Right cardiac atrium (tissue), 5 donors: ENCODE measurements at regions of chr16 and their contacts with region 1.

Region 1: DNA sequence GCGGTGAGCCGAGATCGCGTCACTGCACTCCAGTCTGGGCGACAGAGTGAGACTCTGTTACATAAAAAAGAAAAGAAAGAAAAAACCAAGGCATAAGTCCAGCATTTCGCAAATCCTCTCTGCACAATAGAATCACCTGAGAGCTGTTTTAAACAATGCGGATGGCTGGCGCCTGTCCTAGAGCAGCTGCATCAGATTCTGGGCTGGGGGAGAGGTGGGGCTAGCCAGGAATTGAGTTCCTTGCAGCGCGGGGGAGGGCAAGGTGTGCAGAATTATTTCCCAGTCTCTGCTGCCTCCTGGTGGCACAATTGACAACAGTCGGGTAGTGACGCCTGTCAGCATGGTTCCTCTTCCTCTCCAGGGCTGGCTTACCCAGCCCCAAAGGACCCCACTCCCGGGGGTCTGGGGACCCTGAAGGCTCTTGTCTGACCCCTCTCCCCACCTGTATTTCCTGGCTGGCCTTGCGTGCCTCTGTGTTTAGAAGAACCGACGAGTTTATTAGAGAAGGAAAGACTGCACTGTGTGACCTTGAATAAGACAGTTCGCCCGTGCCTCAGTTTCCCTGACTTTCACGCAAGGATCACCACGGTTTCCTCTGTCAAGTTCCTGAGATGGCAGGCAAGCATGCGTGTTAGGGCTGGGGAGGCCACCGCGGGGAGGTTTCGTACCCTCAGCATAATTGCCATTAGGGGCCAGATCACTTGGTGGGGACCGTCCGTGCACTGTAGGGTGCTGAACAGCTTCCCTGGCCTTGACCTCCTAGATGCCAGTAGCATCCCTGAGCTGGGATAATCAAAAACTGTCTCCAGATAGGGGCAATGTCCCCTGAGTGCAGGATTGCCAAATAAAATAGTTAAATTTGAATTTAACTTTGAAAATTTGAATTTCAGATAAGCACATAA is 41.0 kb upstream of the PLCG2 start:
- DNase-seq: peak; percentile 75 to 89 (median 86)
- ATAC-seq: peak; percentile 90 to 91
- H3K4me3 ChIP-seq: peak overlapping the region; percentile 42
- H3K27ac ChIP-seq: no peak overlapping the region
- H3K4me1 ChIP-seq: no peaks in the 10 kb centered on the region
- H3K27me3 ChIP-seq: no peaks in the 10 kb centered on the region

Region 2: GRCh38 chr16:81204798-81205680 is 533.1 kb before region 1 on chr16:
- intact Hi-C with region 1: loop called in 1 of 4 experiments (anchors 10 kb)
- DNase-seq: no peak
- ATAC-seq: peak; percentile 50 to 66
- H3K4me3 ChIP-seq: no peak overlapping the region
- H3K27ac ChIP-seq: no peak overlapping the region
- H3K4me1 ChIP-seq: no peaks in the 10 kb centered on the region
- H3K27me3 ChIP-seq: no peaks in the 10 kb centered on the region

Region 3: GRCh38 chr16:81366316-81366932 is 371.7 kb before region 1 on chr16:
- intact Hi-C with region 1: loop called in 1 of 4 experiments (anchors 5 kb)
- DNase-seq: no peak
- ATAC-seq: peak; percentile 54 to 56
- H3K4me3 ChIP-seq: no peak overlapping the region
- H3K27ac ChIP-seq: no peak overlapping the region
- H3K4me1 ChIP-seq: no peaks in the 10 kb centered on the region
- H3K27me3 ChIP-seq: no peaks in the 10 kb centered on the region

Region 4: DNA sequence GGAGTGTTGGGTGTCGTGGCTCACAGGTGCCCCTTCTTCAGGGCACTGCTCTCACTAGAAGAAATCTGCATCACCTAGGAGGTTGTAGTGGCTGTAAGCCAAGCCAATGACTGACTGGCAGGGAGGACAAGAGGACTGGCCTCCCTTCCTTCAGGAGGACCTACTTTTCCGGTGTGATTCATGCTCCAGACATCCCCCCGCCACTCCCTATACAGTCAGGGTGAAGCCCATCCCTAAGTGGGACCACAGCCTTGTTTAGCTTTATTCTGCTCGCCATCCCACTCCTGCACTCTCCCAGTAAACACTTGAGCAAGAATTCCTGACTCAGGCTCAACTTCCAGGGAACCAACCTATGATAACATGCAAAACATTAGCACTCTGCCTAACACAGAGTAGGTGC is 108.0 kb after region 1 on chr16:
- intact Hi-C with region 1: no loop called
- DNase-seq: no peak
- ATAC-seq: no peak
- H3K4me3 ChIP-seq: no peak overlapping the region
- H3K27ac ChIP-seq: no peak overlapping the region
- H3K4me1 ChIP-seq: peaks cover 3% of the 10 kb centered on the region
- H3K27me3 ChIP-seq: no peaks in the 10 kb centered on the region